ENCODE measurements at regions of chr18 and their contacts with region 1.

Region 1: DNA sequence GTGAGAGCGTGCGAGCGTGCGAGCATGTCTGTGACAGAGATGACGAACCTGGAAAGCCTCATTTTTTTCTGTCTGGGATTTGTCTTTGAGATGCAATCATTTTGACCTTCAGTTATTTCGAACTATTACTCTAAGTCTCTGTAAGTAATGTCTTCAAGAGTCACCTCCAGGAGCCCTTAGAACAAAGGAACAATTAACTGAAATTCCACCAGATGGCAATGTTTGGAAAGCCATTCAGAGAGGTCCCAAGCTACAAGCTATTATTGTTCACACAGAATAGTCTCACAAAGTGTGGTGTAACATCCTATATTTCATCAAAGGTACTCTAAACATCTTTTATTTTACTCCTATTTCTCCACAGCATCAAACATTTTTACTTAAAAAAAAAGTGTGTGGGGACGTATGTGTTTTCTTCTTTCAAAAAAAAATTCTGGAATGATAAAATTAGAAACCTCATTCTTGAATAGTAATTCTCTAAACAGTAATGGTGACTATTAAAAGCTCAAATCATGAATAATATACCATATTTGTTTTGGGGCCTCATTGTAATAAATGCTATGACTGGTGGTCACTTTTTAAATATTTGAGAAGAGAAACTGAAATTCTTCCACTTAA is 35.1 kb upstream of the MAPRE2 start:
- DNase-seq: no peak
- H3K4me3 ChIP-seq: no peak overlapping the region
- H3K27ac ChIP-seq: no peak overlapping the region
- H3K4me1 ChIP-seq: no peaks in the 10 kb centered on the region
- H3K27me3 ChIP-seq: no peaks in the 10 kb centered on the region
- CTCF ChIP-seq: peak; percentile 61 to 72 (median 67)
- EP300 ChIP-seq: no peak
- POLR2A ChIP-seq: no peak

Region 2: DNA sequence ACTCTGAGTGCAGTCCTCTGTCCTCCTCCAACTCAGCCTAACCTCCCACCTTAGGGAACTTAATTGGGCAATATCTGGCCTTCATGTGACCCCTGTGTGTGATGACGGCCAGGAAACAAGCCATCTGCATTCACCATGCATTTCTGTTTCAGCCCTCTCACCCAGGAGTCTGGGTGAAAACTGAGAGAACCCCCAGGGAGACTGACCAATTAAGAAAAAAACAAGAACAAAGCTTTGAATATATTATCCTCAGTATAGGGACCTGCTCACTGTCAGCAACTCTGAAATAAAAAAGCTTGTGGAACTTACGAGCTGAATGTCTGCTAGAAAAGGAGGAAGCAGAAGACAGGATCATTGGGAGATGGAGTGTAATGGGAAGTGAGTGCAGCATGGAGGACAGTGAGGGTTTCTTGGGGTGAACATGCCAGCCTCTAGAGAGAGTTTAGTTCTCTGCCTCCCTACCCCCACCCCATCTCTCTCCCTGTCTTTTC is 44.7 kb after region 1 on chr18:
- intact Hi-C with region 1: no loop called
- DNase-seq: no peak
- H3K4me3 ChIP-seq: no peak overlapping the region
- H3K27ac ChIP-seq: no peak overlapping the region
- H3K4me1 ChIP-seq: peaks cover 13% of the 10 kb centered on the region
- H3K27me3 ChIP-seq: no peaks in the 10 kb centered on the region
- CTCF ChIP-seq: no peak
- EP300 ChIP-seq: no peak
- POLR2A ChIP-seq: no peak

Region 3: GRCh38 chr18:35132021-35132902 is 126.2 kb after region 1 on chr18:
- intact Hi-C with region 1: loop called in 1 of 4 experiments (anchors 5 kb)
- DNase-seq: no peak
- H3K4me3 ChIP-seq: no peak overlapping the region
- H3K27ac ChIP-seq: no peak overlapping the region
- H3K4me1 ChIP-seq: no peaks in the 10 kb centered on the region
- H3K27me3 ChIP-seq: no peaks in the 10 kb centered on the region
- CTCF ChIP-seq: no peak
- EP300 ChIP-seq: no peak
- POLR2A ChIP-seq: no peak

Region 4: GRCh38 chr18:35143622-35144596 is 137.8 kb after region 1 on chr18:
- intact Hi-C with region 1: loop called (anchors 5 to 10 kb)
- DNase-seq: peak; percentile 42 to 64 (median 57)
- H3K4me3 ChIP-seq: no peak overlapping the region
- H3K27ac ChIP-seq: no peak overlapping the region
- H3K4me1 ChIP-seq: peaks cover 2% of the 10 kb centered on the region
- H3K27me3 ChIP-seq: no peaks in the 10 kb centered on the region
- CTCF ChIP-seq: peak; percentile 45 to 72 (median 67)
- EP300 ChIP-seq: no peak
- POLR2A ChIP-seq: no peak

Region 5: GRCh38 chr18:35355140-35355618 is 349.1 kb after region 1 on chr18:
- intact Hi-C with region 1: loop called in 1 of 4 experiments (anchors 10 kb)
- DNase-seq: peak; percentile 31 to 55 (median 42)
- H3K4me3 ChIP-seq: no peak overlapping the region
- H3K27ac ChIP-seq: no peak overlapping the region
- H3K4me1 ChIP-seq: no peaks in the 10 kb centered on the region
- H3K27me3 ChIP-seq: no peaks in the 10 kb centered on the region
- CTCF ChIP-seq: peak in 1 of 3 donors; percentile 41
- EP300 ChIP-seq: no peak
- POLR2A ChIP-seq: no peak

Measured in ovary (tissue), 10 donors.